GM13977 (cell line): ENCODE measurements at regions of chr6 and their contacts with region 1.

Region 1: GRCh38 chr6:138115877-138116660 is 8.8 kb upstream of the PERP start:
- DNase-seq: peak; percentile 56
- CTCF ChIP-seq: peak; percentile 67

Region 2: GRCh38 chr6:138287144-138287955 is 171.3 kb after region 1 on chr6:
- in situ Hi-C with region 1: loop called (anchors 10 kb)
- DNase-seq: peak; percentile 67
- CTCF ChIP-seq: peak; percentile 73

Region 3: DNA sequence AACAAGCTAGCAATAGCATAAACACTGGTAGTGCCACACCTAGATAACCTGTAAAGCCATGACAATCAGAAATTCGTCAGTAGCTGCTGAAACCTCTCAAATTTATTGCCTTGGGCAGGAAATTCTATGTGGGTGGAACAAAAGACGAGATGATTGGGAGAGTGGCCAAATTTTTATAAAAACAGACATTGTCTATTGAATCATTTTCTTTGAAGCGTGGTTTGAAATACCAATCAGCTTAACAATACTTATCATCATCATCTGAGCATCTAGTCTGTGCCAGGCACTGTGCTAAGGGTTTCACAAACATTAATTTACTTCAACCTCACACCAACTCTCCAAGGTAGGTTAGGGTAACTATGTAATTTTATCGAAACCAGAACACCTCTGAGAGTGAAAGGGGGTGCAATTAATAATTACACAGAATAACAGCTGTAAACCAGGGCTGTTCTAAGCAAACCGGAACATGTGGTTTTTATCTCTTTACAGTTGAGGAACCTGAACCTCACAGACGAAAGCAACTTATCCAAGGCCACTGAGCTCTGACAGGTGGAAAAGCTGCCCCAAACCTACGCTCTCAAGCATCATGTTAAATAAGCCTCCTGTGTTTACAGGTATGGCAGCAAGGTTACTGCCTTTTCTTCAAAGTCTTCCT is 339.8 kb after region 1 on chr6:
- in situ Hi-C with region 1: no loop called
- DNase-seq: peak; percentile 62
- CTCF ChIP-seq: no peak

Region 4: GRCh38 chr6:138517635-138518034 is 401.6 kb after region 1 on chr6:
- in situ Hi-C with region 1: loop called (anchors 10 kb)
- DNase-seq: peak; percentile 47
- CTCF ChIP-seq: peak; percentile 83